Vagina (tissue), 2 donors: ENCODE measurements at regions of chr13 and their contacts with region 1.

Region 1: GRCh38 chr13:85797311-85797710 is 1.9 kb downstream of the SLITRK6 start:
- DNase-seq: no peak
- H3K4me3 ChIP-seq: peak overlapping the region in 1 of 2 donors; percentile 18
- H3K27ac ChIP-seq: no peak overlapping the region
- H3K4me1 ChIP-seq: no peaks in the 10 kb centered on the region
- H3K27me3 ChIP-seq: no peaks in the 10 kb centered on the region
- CTCF ChIP-seq: no peak
- POLR2A ChIP-seq: no peak

Region 2: DNA sequence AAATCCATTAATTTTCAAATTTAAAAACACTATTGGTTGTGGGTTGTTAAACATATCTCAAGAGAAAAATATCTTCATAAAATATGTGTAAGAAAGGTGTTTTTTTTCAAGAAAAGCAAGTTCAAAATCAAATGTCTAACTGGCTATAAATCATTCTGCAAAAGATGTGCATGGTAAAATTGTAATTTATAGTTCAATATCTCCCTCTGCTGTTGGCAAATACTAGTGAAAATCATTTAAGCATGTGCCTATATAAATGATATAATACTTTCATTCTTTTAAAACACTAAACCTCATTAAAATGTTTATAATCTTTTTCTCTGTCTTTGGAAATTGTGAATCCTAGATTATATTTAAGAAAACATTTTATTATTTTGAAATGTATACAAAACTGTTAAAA is 19.1 kb after region 1 on chr13:
- intact Hi-C with region 1: loop called (anchors 2 kb)
- DNase-seq: no peak
- H3K4me3 ChIP-seq: no peak overlapping the region
- H3K27ac ChIP-seq: no peak overlapping the region
- H3K4me1 ChIP-seq: no peaks in the 10 kb centered on the region
- H3K27me3 ChIP-seq: no peaks in the 10 kb centered on the region
- CTCF ChIP-seq: no peak
- POLR2A ChIP-seq: no peak